ENCODE measurements at regions of chr12 and their contacts with region 1.

Region 1: DNA sequence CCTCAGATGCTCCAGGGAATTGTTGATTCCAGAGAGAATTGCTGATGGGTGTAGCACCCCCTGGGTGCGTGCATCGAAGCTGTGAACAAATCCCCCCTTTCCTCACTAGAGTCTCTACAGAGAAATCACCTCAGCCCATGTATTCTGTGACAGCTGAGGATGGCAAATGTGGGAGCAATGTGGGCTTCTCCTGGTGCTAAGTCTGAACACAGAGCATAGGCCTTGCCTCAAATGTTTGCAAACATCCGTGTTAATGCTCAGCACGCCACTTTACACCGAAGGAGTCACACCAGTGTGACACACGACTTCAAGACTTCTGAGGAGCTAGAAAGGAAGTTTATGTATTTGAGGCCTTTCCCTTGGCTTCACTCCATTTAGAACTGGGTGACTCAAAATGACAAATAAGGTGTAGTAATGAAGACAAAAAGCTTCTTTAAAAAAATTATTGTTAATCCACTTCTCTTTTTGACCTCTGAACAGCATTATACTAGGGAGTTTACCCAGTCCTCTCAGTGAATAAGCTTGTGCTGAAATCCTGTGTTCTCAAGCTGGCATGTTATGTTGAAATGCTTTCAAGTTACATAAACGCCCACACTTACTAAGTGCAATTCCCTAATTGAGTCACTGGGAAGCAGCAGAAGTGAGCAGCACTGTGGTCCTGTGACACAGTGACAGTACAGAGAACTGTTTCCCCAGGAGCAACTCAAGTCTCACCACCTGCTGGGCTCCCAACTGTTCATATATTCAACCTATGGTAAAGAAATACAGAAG is 92.9 kb downstream of the FAR2 start:
- DNase-seq: peak in 1 of 2 experiments; percentile 37
- H3K4me3 ChIP-seq: no peak overlapping the region
- H3K4me3 Mint-ChIP-seq: no peak overlapping the region
- H3K27ac Mint-ChIP-seq: no peak overlapping the region
- H3K4me1 ChIP-seq: no peaks in the 10 kb centered on the region
- H3K4me1 Mint-ChIP-seq: peaks cover 7% of the 10 kb centered on the region
- H3K27me3 ChIP-seq: no peaks in the 10 kb centered on the region; the same call in 1 of the 2 replicates
- H3K27me3 Mint-ChIP-seq: no peaks in the 10 kb centered on the region
- CTCF ChIP-seq: peak in 1 of 2 experiments; percentile 29

Region 2: DNA sequence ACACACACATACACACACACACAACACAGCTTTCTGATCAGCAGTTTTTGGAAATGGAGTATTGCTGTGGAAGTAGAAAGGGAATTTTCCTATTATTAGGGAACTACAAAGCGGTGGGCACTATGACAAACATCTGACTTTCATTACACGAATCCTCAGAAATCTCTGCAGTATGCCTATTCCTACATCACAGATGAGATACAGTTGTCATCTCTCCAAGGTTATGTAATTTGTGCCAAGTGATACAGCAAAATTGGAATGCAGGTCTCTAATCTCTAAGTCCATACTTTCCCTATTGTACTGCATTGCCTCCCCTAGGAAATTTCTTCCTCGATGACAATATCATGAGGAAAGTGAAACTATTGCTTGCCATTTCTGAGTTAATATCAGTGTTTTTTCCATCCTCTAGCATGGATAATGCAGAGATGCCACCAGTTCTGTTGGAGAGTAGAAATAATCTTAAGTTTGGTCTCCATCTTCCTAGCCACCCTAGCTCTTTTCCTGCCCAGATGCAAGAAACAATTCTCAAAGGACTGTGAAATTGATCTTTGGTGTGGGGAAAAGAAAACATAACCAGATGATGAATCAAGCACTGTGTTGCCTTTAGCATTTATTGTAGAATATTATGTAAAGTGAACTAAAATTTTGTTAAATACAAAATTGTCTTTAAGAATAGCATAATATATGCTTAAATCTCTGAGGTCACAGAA is 44.2 kb after region 1 on chr12:
- CTCF ChIA-PET with region 1: no interaction called
- POLR2A ChIA-PET with region 1: no interaction called
- intact Hi-C with region 1: loop called (anchors 5 kb)
- DNase-seq: no peak
- H3K4me3 ChIP-seq: no peak overlapping the region
- H3K4me3 Mint-ChIP-seq: no peak overlapping the region
- H3K27ac Mint-ChIP-seq: no peak overlapping the region
- H3K4me1 ChIP-seq: peaks cover 10% of the 10 kb centered on the region
- H3K4me1 Mint-ChIP-seq: peaks cover 7% of the 10 kb centered on the region
- H3K27me3 ChIP-seq: no peaks in the 10 kb centered on the region
- H3K27me3 Mint-ChIP-seq: no peaks in the 10 kb centered on the region
- CTCF ChIP-seq: no peak

Region 3: DNA sequence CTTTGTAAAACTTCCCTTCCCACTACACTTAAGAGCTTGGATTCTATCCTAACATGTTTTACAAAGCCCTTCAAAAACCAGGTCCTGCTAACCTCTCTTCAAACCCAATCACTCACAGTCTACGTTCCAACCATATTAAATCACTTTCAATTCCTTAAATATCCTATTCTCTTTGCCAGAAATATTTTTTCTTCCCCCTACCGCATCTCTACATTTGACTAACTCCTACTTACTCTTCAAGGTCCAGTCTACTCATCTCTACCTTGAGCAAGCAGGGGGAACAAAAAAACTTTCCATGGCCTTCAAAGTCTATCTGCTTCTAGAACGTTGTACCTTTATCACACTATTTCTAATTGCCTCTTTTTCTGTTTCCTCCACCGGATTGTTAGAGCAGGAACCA is 132.9 kb after region 1 on chr12:
- CTCF ChIA-PET with region 1: no interaction called
- POLR2A ChIA-PET with region 1: no interaction called
- intact Hi-C with region 1: no loop called
- DNase-seq: no peak
- H3K4me3 ChIP-seq: no peak overlapping the region
- H3K4me3 Mint-ChIP-seq: no peak overlapping the region
- H3K27ac Mint-ChIP-seq: no peak overlapping the region
- H3K4me1 ChIP-seq: peaks cover 24% of the 10 kb centered on the region
- H3K4me1 Mint-ChIP-seq: peaks cover 17% of the 10 kb centered on the region
- H3K27me3 ChIP-seq: no peaks in the 10 kb centered on the region
- H3K27me3 Mint-ChIP-seq: no peaks in the 10 kb centered on the region
- CTCF ChIP-seq: no peak

Measured in Caco-2 (cell line).